Activated naive CD4-positive, alpha-beta T cell treated with anti-CD3 and anti-CD28 coated beads for 36 hours (primary cell): ENCODE measurements at regions of chr20 and their contacts with region 1.

Region 1: GRCh38 chr20:29119141-29119540 is 2138.3 kb upstream of the DEFB115 start:
- DNase-seq: no peak
- H3K4me3 Mint-ChIP-seq: no peak overlapping the region
- H3K27ac Mint-ChIP-seq: no peak overlapping the region
- H3K4me1 Mint-ChIP-seq: no peaks in the 10 kb centered on the region
- H3K27me3 Mint-ChIP-seq: no peaks in the 10 kb centered on the region

Region 2: GRCh38 chr20:29298759-29299613 is 179.8 kb after region 1 on chr20:
- CTCF ChIA-PET with region 1: no interaction called
- intact Hi-C with region 1: no loop called
- DNase-seq: no peak
- H3K4me3 Mint-ChIP-seq: no peak overlapping the region
- H3K27ac Mint-ChIP-seq: no peak overlapping the region
- H3K4me1 Mint-ChIP-seq: no peaks in the 10 kb centered on the region
- H3K27me3 Mint-ChIP-seq: peaks cover 4% of the 10 kb centered on the region

Region 3: GRCh38 chr20:29873946-29874345 is 754.8 kb after region 1 on chr20:
- CTCF ChIA-PET with region 1: no interaction called
- intact Hi-C with region 1: loop called (anchors 10 kb)
- DNase-seq: peak; percentile 26
- H3K4me3 Mint-ChIP-seq: no peak overlapping the region
- H3K27ac Mint-ChIP-seq: no peak overlapping the region
- H3K4me1 Mint-ChIP-seq: no peaks in the 10 kb centered on the region
- H3K27me3 Mint-ChIP-seq: peaks cover 9% of the 10 kb centered on the region